MCF 10A (cell line): ENCODE measurements at regions of chr10 and their contacts with region 1.

Region 1: GRCh38 chr10:70363971-70364771 is 18.3 kb downstream of the LRRC20 start:
- DNase-seq: peak; percentile 98
- H3K4me3 Mint-ChIP-seq: peak overlapping the region; percentile 49
- H3K27ac Mint-ChIP-seq: peak overlapping the region; percentile 92
- H3K4me1 Mint-ChIP-seq: peaks cover 6% of the 10 kb centered on the region
- H3K27me3 Mint-ChIP-seq: no peaks in the 10 kb centered on the region
- CTCF ChIP-seq: peak; percentile 89

Region 2: GRCh38 chr10:69692267-69692666 is 671.9 kb before region 1 on chr10:
- CTCF ChIA-PET with region 1: no interaction called
- POLR2A ChIA-PET with region 1: no interaction called
- intact Hi-C with region 1: no loop called
- DNase-seq: no peak
- H3K4me3 Mint-ChIP-seq: no peak overlapping the region
- H3K27ac Mint-ChIP-seq: no peak overlapping the region
- H3K4me1 Mint-ChIP-seq: no peaks in the 10 kb centered on the region
- H3K27me3 Mint-ChIP-seq: peaks cover 16% of the 10 kb centered on the region
- CTCF ChIP-seq: no peak

Region 3: GRCh38 chr10:69861251-69862240 is 502.6 kb before region 1 on chr10:
- CTCF ChIA-PET with region 1: no interaction called
- POLR2A ChIA-PET with region 1: no interaction called
- intact Hi-C with region 1: no loop called
- DNase-seq: peak; percentile 94
- H3K4me3 Mint-ChIP-seq: no peak overlapping the region
- H3K27ac Mint-ChIP-seq: peak overlapping the region; percentile 29
- H3K4me1 Mint-ChIP-seq: peaks cover 15% of the 10 kb centered on the region
- H3K27me3 Mint-ChIP-seq: no peaks in the 10 kb centered on the region
- CTCF ChIP-seq: peak; percentile 14

Region 4: DNA sequence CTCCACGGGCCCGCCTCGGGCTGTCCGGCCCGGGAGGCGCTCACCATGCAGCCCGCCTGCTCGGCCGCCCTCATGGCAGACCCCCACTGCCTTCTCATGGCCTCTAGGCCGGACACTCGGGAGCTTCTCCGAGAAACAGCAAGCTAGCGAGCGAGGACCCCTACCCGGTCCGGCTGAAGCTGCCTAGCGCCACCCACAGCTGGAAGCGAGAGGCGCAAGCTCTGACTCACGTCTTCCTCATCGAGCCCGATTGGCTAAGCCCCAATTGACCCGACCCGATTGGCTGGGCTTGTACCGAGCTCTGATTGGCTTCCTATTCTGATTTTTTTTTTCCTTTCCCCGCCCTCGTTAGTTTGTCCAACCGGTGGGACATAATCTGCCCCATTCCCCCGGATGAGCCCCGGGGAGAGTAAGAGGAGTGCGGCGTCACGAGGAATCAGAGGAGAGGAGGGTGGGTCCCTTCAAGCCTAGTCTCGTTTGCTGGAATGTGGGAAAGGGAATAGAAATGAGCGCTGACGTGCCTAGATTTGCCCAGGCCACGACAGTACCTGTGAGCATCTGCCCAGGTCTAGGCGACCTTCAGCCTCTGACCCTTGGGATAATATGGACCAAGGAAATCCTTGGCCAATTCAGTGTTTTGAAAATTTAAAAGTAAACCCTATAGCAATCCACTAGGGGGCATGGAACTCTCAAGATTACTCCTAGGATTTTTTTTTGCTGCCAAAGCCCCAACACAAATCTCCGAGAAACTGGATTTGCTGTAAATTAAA is 217.5 kb before region 1 on chr10 and contains the start of gene TYSND1:
- CTCF ChIA-PET with region 1: interaction called, 20 read pairs
- POLR2A ChIA-PET with region 1: interaction called, 33 read pairs
- intact Hi-C with region 1: loop called (anchors 1 kb)
- DNase-seq: peak; percentile 99
- H3K4me3 Mint-ChIP-seq: peak within 1 kb of the TSS; percentile 80
- H3K27ac Mint-ChIP-seq: peak within 1 kb of the TSS; percentile 87
- H3K4me1 Mint-ChIP-seq: peaks cover 14% of the 10 kb centered on the region
- H3K27me3 Mint-ChIP-seq: no peaks in the 10 kb centered on the region
- CTCF ChIP-seq: peak; percentile 65
- total RNA-seq, gene TYSND1: 14.6 and 16.5 TPM in 2 replicates

Region 5: GRCh38 chr10:70227548-70228320 is 136.4 kb before region 1 on chr10:
- CTCF ChIA-PET with region 1: interaction called, 232 read pairs
- POLR2A ChIA-PET with region 1: interaction called, 116 read pairs
- intact Hi-C with region 1: no loop called
- DNase-seq: peak; percentile 16
- H3K4me3 Mint-ChIP-seq: peak overlapping the region; percentile 29
- H3K27ac Mint-ChIP-seq: peak overlapping the region; percentile 81
- H3K4me1 Mint-ChIP-seq: peaks cover 42% of the 10 kb centered on the region
- H3K27me3 Mint-ChIP-seq: no peaks in the 10 kb centered on the region
- CTCF ChIP-seq: no peak

Region 6: GRCh38 chr10:70272925-70273316 is 91.2 kb before region 1 on chr10:
- CTCF ChIA-PET with region 1: interaction called, 23 read pairs
- POLR2A ChIA-PET with region 1: interaction called, 18 read pairs
- intact Hi-C with region 1: no loop called
- DNase-seq: peak; percentile 30
- H3K4me3 Mint-ChIP-seq: no peak overlapping the region
- H3K27ac Mint-ChIP-seq: no peak overlapping the region
- H3K4me1 Mint-ChIP-seq: peaks cover 8% of the 10 kb centered on the region
- H3K27me3 Mint-ChIP-seq: no peaks in the 10 kb centered on the region
- CTCF ChIP-seq: peak; percentile 28

Region 7: DNA sequence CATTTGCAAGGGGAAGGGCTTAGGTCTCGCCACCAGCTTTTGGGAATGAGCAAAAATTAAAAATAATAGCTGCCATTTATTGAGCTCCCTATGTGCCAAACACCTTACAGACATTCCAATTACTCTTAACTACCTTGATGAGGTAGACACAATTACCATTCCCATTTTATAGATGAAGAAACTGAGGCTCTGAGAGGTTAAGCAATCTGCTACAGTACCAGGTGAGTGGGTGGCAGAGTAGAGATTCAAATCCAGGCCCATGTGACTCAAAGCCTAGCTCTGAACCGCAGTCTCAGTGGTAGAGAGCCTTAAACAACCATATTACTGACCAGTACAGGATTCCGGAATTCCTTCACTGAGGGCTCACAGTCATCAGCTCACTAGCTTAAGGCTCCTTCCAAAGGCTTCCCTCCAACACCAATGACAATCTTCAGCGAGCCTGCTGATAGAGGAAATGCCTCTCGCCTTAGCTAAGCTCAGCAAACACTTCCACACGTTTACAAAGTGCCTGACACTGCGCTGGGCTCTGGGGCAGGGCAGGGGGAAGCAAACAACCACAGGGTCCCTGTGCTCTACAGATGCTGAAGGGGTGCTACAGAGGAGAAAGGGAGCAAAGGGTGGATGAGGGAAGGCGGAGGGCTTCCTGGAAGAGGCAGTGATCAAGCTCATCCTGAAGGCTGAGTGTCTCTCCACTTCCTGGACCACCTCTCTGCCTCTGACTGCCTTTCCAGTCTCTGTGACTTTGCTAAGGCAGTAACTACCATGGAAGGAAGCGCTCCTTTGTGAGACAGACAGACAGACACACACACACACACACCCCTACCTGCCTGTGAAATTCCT is 10.8 kb after region 1 on chr10:
- CTCF ChIA-PET with region 1: interaction called, 33 read pairs
- POLR2A ChIA-PET with region 1: interaction called, 16 read pairs
- intact Hi-C with region 1: no loop called
- DNase-seq: no peak
- H3K4me3 Mint-ChIP-seq: no peak overlapping the region
- H3K27ac Mint-ChIP-seq: no peak overlapping the region
- H3K4me1 Mint-ChIP-seq: peaks cover 28% of the 10 kb centered on the region
- H3K27me3 Mint-ChIP-seq: no peaks in the 10 kb centered on the region
- CTCF ChIP-seq: no peak

Region 8: DNA sequence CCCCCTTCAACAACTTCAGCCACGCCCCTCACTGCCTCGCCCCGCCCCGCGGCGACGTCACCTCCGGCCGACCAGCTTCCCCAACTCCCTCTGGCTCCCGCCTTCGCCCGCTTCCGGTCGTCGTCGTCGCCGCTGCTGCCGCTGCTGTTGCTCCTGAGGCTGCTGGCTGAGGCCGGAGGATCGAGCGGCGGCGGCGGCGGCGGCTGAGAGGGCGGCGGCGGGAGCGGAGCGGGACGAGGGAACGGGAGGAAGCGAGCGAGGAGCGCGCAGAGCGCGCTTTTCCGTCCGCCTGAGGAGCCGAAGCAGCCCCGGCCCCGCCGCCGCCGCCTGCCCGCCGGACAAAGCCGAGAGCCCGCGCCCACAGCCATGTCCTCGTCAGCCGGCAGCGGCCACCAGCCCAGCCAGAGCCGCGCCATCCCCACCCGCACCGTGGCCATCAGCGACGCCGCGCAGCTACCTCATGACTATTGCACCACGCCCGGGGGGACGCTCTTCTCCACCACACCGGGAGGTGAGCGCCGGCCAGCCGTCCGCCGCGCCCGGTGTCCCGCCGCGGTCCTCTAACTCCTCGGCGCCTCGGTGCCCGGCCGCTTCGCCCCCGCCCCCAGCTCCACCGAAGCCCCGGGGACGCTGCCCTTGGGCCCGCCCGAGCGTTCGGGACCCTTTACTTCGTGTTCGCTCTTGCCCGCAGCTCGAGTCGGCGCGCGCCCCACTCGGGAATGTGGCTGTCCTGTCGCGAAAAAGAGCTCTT is 40.0 kb after region 1 on chr10 and contains the start of gene EIF4EBP2:
- CTCF ChIA-PET with region 1: interaction called, 5 read pairs
- POLR2A ChIA-PET with region 1: interaction called, 24 read pairs
- intact Hi-C with region 1: no loop called
- DNase-seq: peak; percentile 96
- H3K4me3 Mint-ChIP-seq: peak within 1 kb of the TSS; percentile 84
- H3K27ac Mint-ChIP-seq: peak within 1 kb of the TSS; percentile 89
- H3K4me1 Mint-ChIP-seq: peaks cover 20% of the 10 kb centered on the region
- H3K27me3 Mint-ChIP-seq: no peaks in the 10 kb centered on the region
- CTCF ChIP-seq: no peak
- total RNA-seq, gene EIF4EBP2: 21.2 and 26.1 TPM in 2 replicates